Transverse colon (tissue), 4 donors: ENCODE measurements at regions of chr5 and their contacts with region 1.

Region 1: GRCh38 chr5:172559004-172559932 is 81.8 kb upstream of the NEURL1B start:
- DNase-seq: peak; percentile 59
- H3K4me3 ChIP-seq: peak overlapping the region in 1 of 4 donors; percentile 12
- H3K27ac ChIP-seq: peak overlapping the region; percentile 72 to 89 (median 78)
- H3K4me1 ChIP-seq: peaks cover 12 to 39% (median 14%) of the 10 kb centered on the region in 4 donors
- H3K27me3 ChIP-seq: no peaks in the 10 kb centered on the region
- CTCF ChIP-seq: no peak
- EP300 ChIP-seq: no peak
- POLR2A ChIP-seq: no peak

Region 2: GRCh38 chr5:171750311-171750788 is 808.9 kb before region 1 on chr5:
- in situ Hi-C with region 1: no loop called
- intact Hi-C with region 1: no loop called
- DNase-seq: peak; percentile 12
- H3K4me3 ChIP-seq: no peak overlapping the region
- H3K27ac ChIP-seq: no peak overlapping the region
- H3K4me1 ChIP-seq: no peaks in the 10 kb centered on the region
- H3K27me3 ChIP-seq: no peaks in the 10 kb centered on the region
- CTCF ChIP-seq: no peak
- EP300 ChIP-seq: no peak
- POLR2A ChIP-seq: no peak

Region 3: GRCh38 chr5:172524573-172525021 is 34.7 kb before region 1 on chr5:
- in situ Hi-C with region 1: no loop called
- intact Hi-C with region 1: loop called (anchors 5 kb)
- DNase-seq: peak; percentile 33
- H3K4me3 ChIP-seq: no peak overlapping the region
- H3K27ac ChIP-seq: peak overlapping the region; percentile 18 to 81 (median 60)
- H3K4me1 ChIP-seq: peaks cover 0 to 15% (median 9%) of the 10 kb centered on the region in 4 donors
- H3K27me3 ChIP-seq: no peaks in the 10 kb centered on the region
- CTCF ChIP-seq: no peak
- EP300 ChIP-seq: no peak
- POLR2A ChIP-seq: no peak

Region 4: DNA sequence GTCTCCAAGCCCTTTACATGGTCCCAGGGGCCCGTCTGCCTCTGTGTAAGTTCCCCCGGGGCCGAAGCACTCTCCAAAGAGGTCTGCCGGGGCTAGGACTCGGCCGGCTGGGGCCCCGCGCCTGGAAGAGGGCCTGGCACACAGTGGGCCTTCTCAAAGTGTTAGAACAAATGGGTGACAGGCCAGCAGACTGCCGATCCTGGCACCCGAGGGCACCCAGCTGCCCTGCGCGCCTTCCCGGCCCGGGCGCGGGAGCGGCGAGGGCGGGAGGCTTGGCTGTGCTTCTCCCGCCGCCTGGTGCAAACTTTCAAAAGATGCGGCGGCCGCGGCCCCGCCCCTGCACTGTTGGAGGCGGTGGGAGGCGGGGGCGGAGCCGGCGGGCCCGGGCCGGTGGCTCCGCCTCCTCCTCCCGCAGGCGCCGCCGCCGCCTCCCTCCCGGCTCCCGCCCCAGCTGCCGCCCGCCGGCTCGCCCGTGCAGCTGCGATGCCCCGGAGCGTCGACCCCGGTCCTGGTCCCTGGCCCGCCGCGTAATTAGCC is 81.6 kb after region 1 on chr5 and contains the start of gene NEURL1B:
- in situ Hi-C with region 1: no loop called
- intact Hi-C with region 1: loop called (anchors 5 kb)
- DNase-seq: peak; percentile 87
- H3K4me3 ChIP-seq: peak within 1 kb of the TSS; percentile 76 to 94 (median 90)
- H3K27ac ChIP-seq: peak within 1 kb of the TSS; percentile 94 to 95 (median 94)
- H3K4me1 ChIP-seq: peaks cover 28 to 70% (median 54%) of the 10 kb centered on the region in 4 donors
- H3K27me3 ChIP-seq: no peaks in the 10 kb centered on the region
- CTCF ChIP-seq: peak in 2 of 5 experiments; percentile 7 to 9
- EP300 ChIP-seq: no peak
- POLR2A ChIP-seq: peak; percentile 64
- total RNA-seq, gene NEURL1B: 74.6 to 168 (median 94.5) TPM

Region 5: DNA sequence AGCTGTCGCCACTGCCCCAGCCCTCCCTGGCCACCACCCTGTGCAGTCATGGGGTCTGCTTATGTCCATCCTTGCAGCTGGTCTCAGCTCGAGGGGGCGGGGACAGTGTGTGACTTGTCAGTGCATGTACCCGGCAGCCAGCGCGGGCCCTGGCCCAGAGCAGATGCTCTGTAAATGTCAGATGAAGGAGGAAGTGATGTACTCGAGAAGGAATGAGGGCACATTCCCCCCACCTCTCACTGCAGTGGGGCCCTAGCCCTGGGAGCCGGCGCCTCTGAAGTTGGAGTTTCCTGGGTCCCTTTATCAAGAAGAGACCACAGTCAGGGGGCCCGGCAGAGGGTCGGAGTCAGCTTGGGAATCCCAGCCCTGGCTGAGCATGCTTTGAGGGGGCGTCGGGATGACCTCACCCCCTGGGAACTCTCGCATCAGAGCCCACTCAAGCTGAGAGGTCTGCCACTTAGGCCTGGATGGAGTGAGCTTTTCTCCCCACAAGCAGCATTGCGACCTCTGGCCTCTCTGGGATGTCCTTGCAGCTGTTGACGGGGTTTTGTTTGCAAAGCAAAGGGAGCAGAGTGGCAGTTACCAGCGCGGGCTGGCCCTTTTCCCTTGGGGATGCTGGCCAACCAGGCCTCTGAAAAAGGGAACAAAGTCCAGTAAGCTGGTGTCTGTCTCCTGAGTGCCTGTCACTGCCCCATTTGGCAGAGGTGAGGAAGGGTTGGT is 100.8 kb after region 1 on chr5:
- in situ Hi-C with region 1: no loop called
- intact Hi-C with region 1: loop called (anchors 5 kb)
- DNase-seq: peak; percentile 83
- H3K4me3 ChIP-seq: no peak overlapping the region
- H3K27ac ChIP-seq: peak overlapping the region; percentile 86 to 94 (median 90)
- H3K4me1 ChIP-seq: peaks cover 40 to 64% (median 50%) of the 10 kb centered on the region in 4 donors
- H3K27me3 ChIP-seq: no peaks in the 10 kb centered on the region
- CTCF ChIP-seq: no peak
- EP300 ChIP-seq: peak; percentile 30
- POLR2A ChIP-seq: peak; percentile 4